ENCODE measurements at regions of chr18 and their contacts with region 1.

Region 1: DNA sequence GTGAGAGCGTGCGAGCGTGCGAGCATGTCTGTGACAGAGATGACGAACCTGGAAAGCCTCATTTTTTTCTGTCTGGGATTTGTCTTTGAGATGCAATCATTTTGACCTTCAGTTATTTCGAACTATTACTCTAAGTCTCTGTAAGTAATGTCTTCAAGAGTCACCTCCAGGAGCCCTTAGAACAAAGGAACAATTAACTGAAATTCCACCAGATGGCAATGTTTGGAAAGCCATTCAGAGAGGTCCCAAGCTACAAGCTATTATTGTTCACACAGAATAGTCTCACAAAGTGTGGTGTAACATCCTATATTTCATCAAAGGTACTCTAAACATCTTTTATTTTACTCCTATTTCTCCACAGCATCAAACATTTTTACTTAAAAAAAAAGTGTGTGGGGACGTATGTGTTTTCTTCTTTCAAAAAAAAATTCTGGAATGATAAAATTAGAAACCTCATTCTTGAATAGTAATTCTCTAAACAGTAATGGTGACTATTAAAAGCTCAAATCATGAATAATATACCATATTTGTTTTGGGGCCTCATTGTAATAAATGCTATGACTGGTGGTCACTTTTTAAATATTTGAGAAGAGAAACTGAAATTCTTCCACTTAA is 35.1 kb upstream of the MAPRE2 start:
- DNase-seq: no peak
- H3K4me3 Mint-ChIP-seq: no peak overlapping the region
- H3K27ac Mint-ChIP-seq: no peak overlapping the region
- H3K4me1 Mint-ChIP-seq: no peaks in the 10 kb centered on the region
- H3K27me3 Mint-ChIP-seq: no peaks in the 10 kb centered on the region

Region 2: DNA sequence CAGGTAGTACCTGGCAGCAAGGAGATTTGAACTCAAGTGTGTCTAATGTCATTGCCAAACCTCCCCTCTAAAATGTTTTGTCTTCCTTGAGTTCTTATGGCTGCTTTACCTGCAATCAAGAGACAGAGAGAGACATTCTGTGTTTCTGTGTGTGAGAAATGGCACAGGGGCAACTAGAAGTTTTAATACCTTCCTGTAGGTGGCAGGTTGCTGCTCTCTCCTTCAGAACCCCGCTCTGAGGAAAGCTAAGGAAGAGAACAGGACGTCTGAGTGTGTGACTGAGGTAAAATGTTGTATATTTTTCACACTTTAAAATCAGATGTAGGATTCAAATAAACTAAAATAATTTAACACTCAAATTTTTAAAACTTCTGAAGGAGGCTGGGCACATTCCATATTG is 276.8 kb before region 1 on chr18:
- CTCF ChIA-PET with region 1: no interaction called
- POLR2A ChIA-PET with region 1: no interaction called
- intact Hi-C with region 1: no loop called
- DNase-seq: no peak
- H3K4me3 Mint-ChIP-seq: no peak overlapping the region
- H3K27ac Mint-ChIP-seq: no peak overlapping the region
- H3K4me1 Mint-ChIP-seq: no peaks in the 10 kb centered on the region
- H3K27me3 Mint-ChIP-seq: no peaks in the 10 kb centered on the region

Region 3: GRCh38 chr18:35143622-35144596 is 137.8 kb after region 1 on chr18:
- CTCF ChIA-PET with region 1: interaction called, 61 read pairs
- POLR2A ChIA-PET with region 1: no interaction called
- intact Hi-C with region 1: loop called (anchors 1 kb)
- DNase-seq: peak; percentile 38
- H3K4me3 Mint-ChIP-seq: no peak overlapping the region
- H3K27ac Mint-ChIP-seq: no peak overlapping the region
- H3K4me1 Mint-ChIP-seq: no peaks in the 10 kb centered on the region
- H3K27me3 Mint-ChIP-seq: no peaks in the 10 kb centered on the region

Region 4: DNA sequence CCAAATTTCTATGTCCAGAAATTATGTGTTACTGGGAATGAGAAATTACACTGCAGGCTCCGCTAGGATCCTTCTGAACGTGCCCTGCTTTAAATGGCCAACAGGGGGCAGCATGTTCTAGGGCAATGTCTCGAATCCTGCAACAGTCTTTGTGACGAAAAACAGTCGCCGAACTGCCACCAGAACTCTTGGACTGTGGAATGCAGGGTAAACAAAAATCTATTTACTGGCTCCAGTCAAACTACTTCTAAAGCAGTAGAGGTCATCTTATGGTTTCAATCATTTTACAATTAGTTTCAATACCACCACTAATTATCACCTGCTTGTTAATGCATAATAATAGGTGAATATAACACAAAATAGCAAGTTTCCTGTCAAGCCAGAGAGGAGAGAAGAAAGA is 225.0 kb after region 1 on chr18:
- CTCF ChIA-PET with region 1: interaction called, 4 read pairs
- POLR2A ChIA-PET with region 1: no interaction called
- intact Hi-C with region 1: loop called (anchors 2 kb)
- DNase-seq: peak; percentile 83
- H3K4me3 Mint-ChIP-seq: peak overlapping the region; percentile 31
- H3K27ac Mint-ChIP-seq: no peak overlapping the region
- H3K4me1 Mint-ChIP-seq: peaks cover 3% of the 10 kb centered on the region
- H3K27me3 Mint-ChIP-seq: peaks cover 3% of the 10 kb centered on the region

Region 5: DNA sequence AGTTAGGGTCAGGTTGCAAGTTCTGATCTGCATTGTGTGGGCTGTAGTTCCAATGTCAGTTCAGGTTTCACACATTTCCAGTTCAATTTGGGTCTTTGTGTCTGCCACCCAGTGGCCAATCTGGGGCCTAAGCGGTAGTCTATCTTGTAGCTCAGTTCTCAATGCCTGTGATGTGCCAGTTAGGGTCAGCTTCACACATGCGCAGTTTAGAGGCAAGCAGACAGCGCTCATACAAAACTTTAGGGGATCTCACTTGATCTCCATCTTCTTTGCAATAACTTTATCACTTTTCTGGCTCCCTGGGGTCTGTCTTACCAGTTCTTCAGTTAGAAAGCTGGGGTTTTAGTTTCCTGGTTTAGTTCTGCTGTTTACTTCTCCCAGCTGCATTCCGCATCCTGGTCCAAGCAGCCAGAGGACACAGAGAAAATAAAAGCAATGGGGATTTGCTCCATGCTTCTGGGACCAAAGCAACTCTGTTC is 349.1 kb after region 1 on chr18:
- CTCF ChIA-PET with region 1: interaction called, 6 read pairs
- POLR2A ChIA-PET with region 1: no interaction called
- intact Hi-C with region 1: loop called (anchors 10 kb)
- DNase-seq: peak; percentile 71
- H3K4me3 Mint-ChIP-seq: no peak overlapping the region
- H3K27ac Mint-ChIP-seq: no peak overlapping the region
- H3K4me1 Mint-ChIP-seq: peaks cover 5% of the 10 kb centered on the region
- H3K27me3 Mint-ChIP-seq: no peaks in the 10 kb centered on the region

Measured in activated CD4-positive, alpha-beta memory T cell treated with anti-CD3 and anti-CD28 coated beads for 36 hours (primary cell).